Activated CD4-positive, alpha-beta T cell treated with anti-CD3 and anti-CD28 coated beads for 36 hours (primary cell): ENCODE measurements at regions of chr11 and their contacts with region 1.

Region 1: DNA sequence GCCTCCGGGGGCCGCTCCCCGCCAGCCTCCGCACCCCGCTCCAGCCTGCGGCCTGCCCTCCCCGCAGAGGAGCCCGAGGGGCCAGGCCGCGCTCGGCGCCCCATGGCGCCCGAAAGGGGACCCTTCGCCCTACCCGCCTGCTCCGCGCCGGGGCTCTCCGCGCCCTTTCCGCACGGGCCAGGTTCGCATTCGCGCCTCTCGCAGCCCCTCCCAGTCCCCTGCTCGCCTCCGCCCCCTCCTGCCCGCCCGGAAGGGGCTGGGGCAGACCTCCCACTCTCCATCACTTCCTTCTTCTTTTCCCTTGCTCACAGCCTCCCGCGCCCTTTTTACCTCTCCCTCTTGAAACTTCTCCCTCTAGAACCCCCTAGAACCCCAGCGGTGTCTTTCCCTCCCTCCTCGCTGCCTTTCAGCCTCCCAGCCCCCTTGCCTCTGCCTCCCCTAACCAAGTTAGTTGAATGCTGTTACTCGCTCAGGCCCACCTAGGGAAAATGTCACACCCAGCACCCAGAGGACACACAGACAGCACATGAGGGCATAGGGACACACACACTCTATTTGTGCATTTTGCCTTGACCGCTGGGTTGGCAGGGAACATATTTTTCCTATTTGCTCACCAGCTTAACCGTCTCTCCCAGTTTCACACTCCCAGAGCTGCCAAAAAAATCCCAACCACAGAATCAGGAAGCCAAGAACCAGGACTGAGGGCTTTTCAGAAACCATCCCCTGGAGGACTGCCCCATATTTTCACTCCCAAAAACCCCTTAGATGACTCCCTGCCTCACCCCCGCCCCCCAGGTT is at the start of gene SLC43A3:
- DNase-seq: peak; percentile 90
- ATAC-seq: peak; percentile 67
- H3K4me3 Mint-ChIP-seq: peak within 1 kb of the TSS; percentile 98
- H3K27ac Mint-ChIP-seq: peak within 1 kb of the TSS; percentile 95
- H3K4me1 Mint-ChIP-seq: peaks cover 34% of the 10 kb centered on the region
- H3K27me3 Mint-ChIP-seq: no peaks in the 10 kb centered on the region
- total RNA-seq, gene SLC43A3: 268 to 333 TPM

Region 2: DNA sequence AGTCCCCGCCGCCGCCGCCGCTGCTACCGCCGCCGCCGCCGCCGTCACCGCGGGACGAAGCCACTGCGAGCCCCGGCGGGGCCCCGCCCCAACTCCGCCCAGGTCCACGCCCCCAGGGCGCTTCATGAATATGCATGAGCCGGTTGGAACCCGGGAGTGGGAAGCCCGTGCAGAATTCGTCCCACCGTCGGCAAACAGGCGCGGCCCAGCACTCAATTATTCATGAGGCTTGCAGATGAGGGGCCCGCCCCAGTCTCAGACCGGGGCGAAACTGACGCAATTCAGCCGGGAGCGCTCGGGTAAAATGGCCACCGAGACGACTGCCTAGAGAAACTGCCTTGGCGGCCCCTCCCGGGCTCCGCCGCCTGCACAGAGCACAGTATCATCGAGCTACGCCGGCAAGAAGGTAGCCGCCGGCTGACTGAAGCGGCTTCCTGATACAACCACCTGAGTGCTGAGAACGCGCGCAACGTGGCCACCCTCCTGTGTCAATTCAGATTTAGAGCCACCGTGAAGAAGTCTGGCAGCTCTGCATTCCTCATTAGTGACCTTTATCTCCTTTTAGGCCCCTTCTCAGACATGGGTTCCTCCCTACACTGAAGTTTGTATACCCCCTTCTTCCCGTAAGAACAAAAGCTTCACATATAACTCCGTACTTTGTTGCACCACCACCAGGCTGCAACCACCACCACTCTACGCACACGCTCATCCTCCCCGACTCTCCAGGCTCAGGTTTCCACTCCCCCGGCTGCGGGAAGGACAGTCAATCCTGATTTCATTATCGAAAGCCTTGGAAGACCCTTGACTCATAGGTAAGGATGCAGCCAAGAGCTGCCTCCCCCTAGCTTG is 102.0 kb before region 1 on chr11 and contains the start of gene TNKS1BP1:
- CTCF ChIA-PET with region 1: no interaction called
- POLR2A ChIA-PET with region 1: no interaction called
- intact Hi-C with region 1: loop called (anchors 1 to 5 kb)
- DNase-seq: peak; percentile 94
- ATAC-seq: peak; percentile 88
- H3K4me3 Mint-ChIP-seq: peak within 1 kb of the TSS; percentile 82
- H3K27ac Mint-ChIP-seq: peak within 1 kb of the TSS; percentile 98
- H3K4me1 Mint-ChIP-seq: peaks cover 58% of the 10 kb centered on the region
- H3K27me3 Mint-ChIP-seq: no peaks in the 10 kb centered on the region
- total RNA-seq, gene TNKS1BP1: 19.1 to 21.6 TPM

Region 3: DNA sequence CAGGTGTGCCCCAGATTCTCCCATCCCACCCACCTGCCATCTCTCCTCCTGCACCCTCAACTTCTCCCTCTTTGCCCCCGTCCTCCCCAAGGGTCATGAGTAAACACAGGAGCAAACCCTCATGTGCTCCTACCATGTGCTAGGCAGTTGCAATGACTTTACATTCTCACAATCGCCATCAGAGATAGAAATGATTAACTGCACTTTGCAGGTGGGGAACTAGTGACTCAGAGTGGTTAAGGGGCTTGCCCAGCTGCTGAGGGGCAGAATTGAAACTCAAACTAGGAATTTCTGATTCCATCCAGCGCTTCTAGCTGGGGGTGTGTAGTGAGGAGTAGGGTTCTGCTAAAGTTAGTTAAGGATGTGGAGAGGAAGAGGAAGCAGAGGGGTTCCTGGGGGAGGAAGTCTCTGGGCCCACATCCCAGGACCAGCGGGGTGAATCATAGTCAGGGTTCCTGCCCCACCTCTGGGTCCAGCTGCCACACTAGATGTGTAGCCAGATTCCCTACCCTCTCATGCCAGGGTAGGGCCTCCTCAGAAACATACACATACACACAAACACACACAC is 20.7 kb before region 1 on chr11:
- CTCF ChIA-PET with region 1: interaction called, 4 read pairs
- POLR2A ChIA-PET with region 1: interaction called, 19 read pairs
- intact Hi-C with region 1: loop called (anchors 1 kb)
- DNase-seq: peak; percentile 71
- ATAC-seq: peak; percentile 85
- H3K4me3 Mint-ChIP-seq: peak overlapping the region; percentile 18
- H3K27ac Mint-ChIP-seq: peak overlapping the region; percentile 77
- H3K4me1 Mint-ChIP-seq: peaks cover 62% of the 10 kb centered on the region
- H3K27me3 Mint-ChIP-seq: no peaks in the 10 kb centered on the region

Region 4: DNA sequence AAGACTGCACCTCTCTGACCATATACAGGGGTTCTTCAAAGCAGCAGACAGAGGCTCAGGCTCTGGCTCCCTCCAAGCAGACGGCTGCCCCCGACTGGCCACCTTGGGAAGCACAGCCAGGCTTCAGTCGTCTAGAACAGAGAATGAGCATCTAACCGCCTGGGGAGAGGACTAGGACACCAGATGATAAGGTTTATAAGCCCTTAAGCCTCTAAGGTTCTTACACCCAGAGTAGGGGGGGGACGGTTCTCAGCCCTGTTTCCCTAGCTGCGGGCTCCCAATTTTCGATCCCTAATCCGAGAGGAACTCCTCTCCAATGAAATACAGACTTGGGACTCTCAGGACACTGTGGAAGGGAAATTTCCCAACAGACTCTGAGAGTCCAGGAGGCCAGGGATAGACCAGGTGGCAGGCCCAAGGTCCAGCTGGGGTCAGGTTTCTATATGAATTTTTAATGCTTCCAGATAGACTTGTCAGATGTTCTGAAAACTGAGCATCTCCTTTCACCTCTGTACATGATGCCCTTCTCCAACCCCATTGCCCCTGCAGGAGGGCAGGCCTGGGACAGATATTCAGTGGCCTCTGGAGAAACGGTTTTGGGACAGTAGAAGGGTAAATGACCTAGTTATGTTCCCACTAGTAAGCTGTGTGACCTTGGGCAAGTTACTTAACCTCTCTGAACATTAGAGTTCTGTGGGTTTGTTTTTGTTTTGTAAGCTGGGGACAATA is 53.4 kb after region 1 on chr11:
- CTCF ChIA-PET with region 1: interaction called, 7 read pairs
- POLR2A ChIA-PET with region 1: no interaction called
- intact Hi-C with region 1: loop called (anchors 2 to 5 kb)
- DNase-seq: peak; percentile 90
- ATAC-seq: peak; percentile 69
- H3K4me3 Mint-ChIP-seq: no peak overlapping the region
- H3K27ac Mint-ChIP-seq: no peak overlapping the region
- H3K4me1 Mint-ChIP-seq: peaks cover 15% of the 10 kb centered on the region
- H3K27me3 Mint-ChIP-seq: peaks cover 11% of the 10 kb centered on the region

Region 5: DNA sequence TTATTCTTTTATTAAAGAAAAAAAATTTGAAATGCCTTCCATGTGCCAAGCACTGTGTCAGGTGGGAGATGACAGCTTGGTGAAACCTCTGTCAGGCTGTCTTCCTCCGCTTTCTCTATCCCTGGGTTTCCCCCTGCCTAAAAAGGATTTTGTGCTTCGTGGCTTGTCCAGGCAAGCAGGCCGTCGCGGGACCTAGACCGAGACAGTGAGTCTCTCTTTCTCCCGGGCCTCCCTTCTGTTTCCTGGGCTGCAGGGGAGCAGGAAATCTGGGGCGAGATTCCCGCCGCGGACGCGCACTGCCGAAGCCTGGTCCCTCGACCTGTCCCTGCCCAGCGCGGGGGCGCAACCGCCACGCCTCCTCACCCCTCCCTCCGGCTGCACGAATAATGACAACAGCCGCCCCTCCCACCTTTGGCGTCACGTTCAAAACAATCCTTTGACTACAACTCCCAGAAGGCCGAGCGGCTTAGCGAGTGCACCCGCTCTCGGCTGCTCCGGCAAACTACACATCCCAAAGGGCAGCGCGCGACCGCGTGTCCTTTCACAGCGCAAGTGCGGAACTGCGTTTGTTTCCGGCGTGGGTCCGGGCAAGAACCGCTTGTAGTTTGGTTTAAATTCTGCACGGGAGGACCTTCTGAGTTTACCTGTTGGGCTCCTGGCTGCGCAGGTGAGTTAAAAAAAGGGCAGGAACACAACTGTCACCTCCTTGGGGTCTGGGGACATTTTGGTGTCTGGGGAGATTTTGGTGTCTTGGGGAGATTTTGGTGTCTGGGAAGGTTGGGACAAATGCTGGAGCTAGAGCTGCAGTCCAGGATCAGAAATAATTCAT is 230.3 kb after region 1 on chr11 and contains the start of gene CLP1:
- CTCF ChIA-PET with region 1: no interaction called
- POLR2A ChIA-PET with region 1: no interaction called
- intact Hi-C with region 1: loop called in 1 of 2 experiments (anchors 2 kb)
- DNase-seq: peak; percentile 100
- ATAC-seq: peak; percentile 98
- H3K4me3 Mint-ChIP-seq: peak within 1 kb of the TSS; percentile 83
- H3K27ac Mint-ChIP-seq: peak within 1 kb of the TSS; percentile 95
- H3K4me1 Mint-ChIP-seq: peaks cover 29% of the 10 kb centered on the region
- H3K27me3 Mint-ChIP-seq: no peaks in the 10 kb centered on the region
- total RNA-seq, gene CLP1: 11.9 to 15.9 TPM

Region 6: GRCh38 chr11:57712256-57713150 is 285.4 kb after region 1 on chr11 and contains the start of gene TMX2:
- CTCF ChIA-PET with region 1: no interaction called
- POLR2A ChIA-PET with region 1: no interaction called
- intact Hi-C with region 1: loop called (anchors 2 to 5 kb)
- DNase-seq: peak; percentile 94
- ATAC-seq: peak; percentile 93
- H3K4me3 Mint-ChIP-seq: peak within 1 kb of the TSS; percentile 97
- H3K27ac Mint-ChIP-seq: peak within 1 kb of the TSS; percentile 97
- H3K4me1 Mint-ChIP-seq: peaks cover 50% of the 10 kb centered on the region
- H3K27me3 Mint-ChIP-seq: no peaks in the 10 kb centered on the region
- total RNA-seq, gene TMX2: 59.8 to 72.5 TPM

Region 7: DNA sequence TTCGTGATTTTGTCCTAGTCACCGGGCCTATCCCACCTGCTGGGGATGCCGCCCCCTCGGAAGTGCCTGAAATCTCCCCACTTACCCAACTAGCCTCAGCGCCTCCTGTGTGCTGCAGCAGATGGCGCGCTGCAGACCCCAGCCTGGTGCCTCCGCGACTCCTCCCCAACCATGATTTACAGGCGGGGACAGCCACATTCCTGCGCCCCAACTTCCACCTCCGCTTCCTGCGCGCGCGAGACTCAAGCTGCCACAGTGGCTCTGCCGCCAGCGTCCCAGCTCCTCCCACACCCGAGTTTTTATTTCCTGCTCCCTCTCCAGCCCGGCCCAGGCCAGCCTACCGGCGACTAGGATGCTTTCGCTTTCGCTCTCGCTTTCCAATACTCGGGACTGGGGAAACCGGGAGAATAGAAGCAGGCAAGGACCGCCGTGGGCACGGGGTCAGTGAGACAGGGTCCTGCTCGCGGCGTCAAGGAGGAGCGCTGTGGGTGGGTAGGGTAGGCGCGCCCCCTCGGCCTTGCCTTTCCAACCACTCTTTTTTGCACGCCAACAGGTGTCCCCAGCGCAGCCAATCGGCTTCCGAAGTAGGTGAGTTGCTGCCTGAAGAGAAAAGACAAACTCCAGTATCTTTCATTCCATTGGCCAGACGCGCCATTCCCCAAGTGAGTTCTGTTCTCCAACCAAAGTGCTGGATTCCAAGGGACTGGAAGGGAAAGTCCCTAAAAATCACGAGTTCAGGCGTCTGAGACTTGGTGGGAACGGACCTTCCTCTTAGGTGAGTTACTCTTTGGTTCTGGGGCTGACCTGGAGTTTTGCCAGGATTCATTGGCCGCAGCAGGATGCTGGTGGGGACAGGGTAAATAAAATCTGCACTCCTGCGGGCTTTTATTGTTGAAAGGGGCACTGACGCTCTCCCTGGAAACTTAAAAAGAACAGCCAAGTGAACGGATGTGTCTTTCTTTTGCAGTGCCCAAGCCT is 1715.7 kb after region 1 on chr11 and contains the start of gene FAM111A:
- CTCF ChIA-PET with region 1: no interaction called
- POLR2A ChIA-PET with region 1: no interaction called
- intact Hi-C with region 1: loop called in 1 of 2 experiments (anchors 5 kb)
- DNase-seq: peak; percentile 90
- ATAC-seq: peak; percentile 77
- H3K4me3 Mint-ChIP-seq: peak within 1 kb of the TSS; percentile 91
- H3K27ac Mint-ChIP-seq: peak within 1 kb of the TSS; percentile 93
- H3K4me1 Mint-ChIP-seq: peaks cover 47% of the 10 kb centered on the region
- H3K27me3 Mint-ChIP-seq: no peaks in the 10 kb centered on the region
- total RNA-seq, gene FAM111A: 87.9 to 135 TPM